Mammary epithelial cell (primary cell): ENCODE measurements at regions of chr5 and their contacts with region 1.

Region 1: DNA sequence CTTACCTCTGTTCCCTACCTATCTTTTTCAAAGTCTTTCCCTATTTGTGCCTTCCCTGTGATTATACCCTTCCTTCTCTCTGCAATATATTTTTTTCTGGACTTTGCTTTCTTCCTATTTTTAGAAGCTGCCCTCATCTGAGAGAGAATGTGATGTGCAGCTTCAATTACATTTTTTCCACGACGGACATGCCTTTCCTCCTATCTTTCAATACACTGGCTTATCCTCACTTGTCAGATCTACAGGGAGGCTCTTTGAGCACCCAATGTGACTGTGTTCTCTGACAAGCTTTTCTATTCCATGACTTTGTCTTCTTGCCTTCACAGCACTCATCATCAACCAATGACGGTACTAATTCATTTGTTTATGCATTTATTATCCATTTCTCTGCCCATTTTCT is 227.9 kb upstream of the CLINT1 start:
- DNase-seq: no peak
- H3K4me3 ChIP-seq: no peak overlapping the region
- H3K27ac ChIP-seq: no peak overlapping the region
- H3K4me1 ChIP-seq: peaks cover 4% of the 10 kb centered on the region
- H3K27me3 ChIP-seq: no peaks in the 10 kb centered on the region
- CTCF ChIP-seq: no peak

Region 2: GRCh38 chr5:158154226-158155005 is 67.6 kb after region 1 on chr5:
- CTCF ChIA-PET with region 1: no interaction called
- dilution Hi-C with region 1: loop called (anchors 5 kb)
- in situ Hi-C with region 1: no loop called
- intact Hi-C with region 1: no loop called
- DNase-seq: peak; percentile 72
- H3K4me3 ChIP-seq: no peak overlapping the region
- H3K27ac ChIP-seq: no peak overlapping the region
- H3K4me1 ChIP-seq: no peaks in the 10 kb centered on the region
- H3K27me3 ChIP-seq: no peaks in the 10 kb centered on the region
- CTCF ChIP-seq: no peak